Dendritic cell treated with granulocyte-macrophage colony-stimulating factor and Interleukin-4, amounts not matched to agents 40 ng/mL and 50 ng/mL, for 4 days (primary cell): ENCODE measurements at regions of chr11 and their contacts with region 1.

Region 1: DNA sequence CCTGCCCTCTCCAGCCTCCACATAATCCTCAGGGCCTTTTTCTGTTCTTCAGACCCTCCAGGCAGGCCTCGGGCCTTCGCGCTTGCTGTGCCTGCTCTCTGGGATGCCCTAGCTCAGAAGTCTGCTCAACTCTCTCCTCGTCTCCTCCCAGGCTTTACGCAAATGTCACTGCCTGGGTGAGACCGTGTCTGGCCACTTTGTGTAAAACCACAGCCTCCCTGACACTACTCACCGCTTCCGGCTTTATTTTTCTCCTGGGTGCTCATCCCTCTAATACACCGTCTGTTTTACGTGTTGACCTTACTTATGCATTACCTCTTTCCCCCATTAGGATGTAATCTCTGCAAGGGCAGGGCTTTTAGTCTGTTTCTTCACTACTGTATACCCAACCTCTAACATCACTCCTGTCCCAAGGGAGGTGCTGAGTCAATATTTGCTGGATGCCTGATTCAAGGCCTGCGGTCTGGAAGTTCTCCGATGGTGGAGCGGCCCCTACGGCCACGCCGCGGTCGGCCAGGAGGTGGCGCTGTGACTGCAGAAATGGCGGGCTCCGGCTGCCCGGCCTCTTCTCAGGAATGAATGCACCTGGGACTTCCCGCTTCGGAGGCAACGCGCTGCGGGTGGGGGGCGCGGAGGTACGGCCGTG is 58.2 kb upstream of the THY1 start:
- H3K4me3 Mint-ChIP-seq: no peak overlapping the region
- H3K27ac Mint-ChIP-seq: no peak overlapping the region
- H3K4me1 Mint-ChIP-seq: peaks cover 11% of the 10 kb centered on the region
- H3K27me3 Mint-ChIP-seq: peaks cover 27% of the 10 kb centered on the region

Region 2: GRCh38 chr11:119533921-119534736 is 53.0 kb after region 1 on chr11:
- intact Hi-C with region 1: loop called (anchors 1 kb)
- H3K4me3 Mint-ChIP-seq: no peak overlapping the region
- H3K27ac Mint-ChIP-seq: peak overlapping the region; percentile 48
- H3K4me1 Mint-ChIP-seq: peaks cover 77% of the 10 kb centered on the region
- H3K27me3 Mint-ChIP-seq: peaks cover 7% of the 10 kb centered on the region

Region 3: DNA sequence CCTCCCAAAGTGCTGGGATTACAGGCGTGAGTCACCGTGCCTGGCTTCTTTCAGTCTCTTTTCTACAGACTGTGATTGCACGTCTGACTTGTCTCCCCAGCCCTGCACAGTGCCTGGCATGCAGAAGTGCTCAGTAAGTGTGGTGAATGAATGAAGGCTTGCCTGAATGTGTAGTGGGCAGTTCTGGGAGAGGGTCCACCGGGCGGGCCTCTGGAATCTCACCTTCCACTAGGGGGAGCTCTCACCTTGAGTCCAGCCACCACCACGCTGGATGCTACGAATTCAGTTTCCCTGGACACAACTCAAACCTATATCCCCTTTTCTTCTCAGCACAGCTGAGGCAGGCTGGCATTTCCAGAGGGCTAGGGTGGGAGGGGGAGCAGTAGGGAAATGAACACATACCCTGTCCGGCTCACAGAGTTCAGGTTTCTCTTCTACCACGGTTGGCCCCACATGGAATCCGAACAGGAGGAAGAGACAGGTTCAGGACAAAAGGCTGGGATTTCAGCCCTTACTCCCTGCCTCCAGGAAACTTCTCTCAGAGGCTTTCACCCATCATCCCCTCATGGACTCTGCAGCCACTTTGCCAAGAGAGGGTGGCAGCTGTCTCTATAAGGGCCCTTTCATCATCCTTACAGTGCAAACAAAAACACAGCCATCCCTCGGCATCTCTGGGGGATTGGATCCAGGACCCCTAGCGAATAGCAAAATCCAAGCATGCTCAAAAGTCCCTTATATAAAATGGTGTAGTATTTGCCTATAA is 161.0 kb after region 1 on chr11:
- intact Hi-C with region 1: loop called (anchors 10 kb)
- H3K4me3 Mint-ChIP-seq: no peak overlapping the region
- H3K27ac Mint-ChIP-seq: no peak overlapping the region
- H3K4me1 Mint-ChIP-seq: peaks cover 26% of the 10 kb centered on the region
- H3K27me3 Mint-ChIP-seq: peaks cover 14% of the 10 kb centered on the region

Region 4: DNA sequence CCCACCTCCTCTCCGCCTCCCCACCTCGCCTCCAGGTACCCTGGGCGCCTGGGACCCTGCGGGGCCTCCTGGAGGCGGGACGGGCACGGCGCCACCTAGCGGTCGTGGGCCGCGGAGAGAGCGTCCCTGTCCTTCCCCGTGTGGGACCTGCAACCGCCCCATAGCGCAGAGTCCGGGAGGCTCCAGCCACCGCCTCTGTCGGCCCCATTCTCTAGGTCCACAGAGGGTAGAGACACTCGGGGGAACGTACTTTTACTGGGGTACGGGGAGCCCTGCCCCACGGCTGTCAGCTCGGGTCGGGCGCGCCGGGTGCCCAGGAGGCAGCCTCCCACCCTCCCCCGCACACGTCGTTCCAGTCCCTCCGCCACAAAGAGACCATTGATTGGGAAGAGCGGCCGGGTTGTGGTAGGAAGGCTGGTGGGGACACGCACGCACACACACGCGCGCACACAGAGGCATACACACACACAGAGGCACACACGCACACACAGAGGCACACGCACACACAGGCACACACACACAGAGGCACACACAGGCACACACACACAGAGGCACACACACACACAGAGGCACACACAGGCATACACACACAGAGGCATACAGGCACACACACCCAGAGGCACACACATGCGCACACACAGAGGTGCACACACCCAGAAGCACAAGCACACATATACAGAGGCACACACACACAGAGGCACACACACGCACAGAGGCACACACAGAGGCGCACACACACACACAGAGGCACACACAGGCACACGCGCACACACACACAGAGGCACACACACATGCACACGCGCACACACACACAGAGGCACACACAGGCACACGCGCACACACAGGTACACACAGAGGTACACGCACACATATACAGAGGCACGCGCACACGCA is 260.5 kb after region 1 on chr11:
- intact Hi-C with region 1: loop called (anchors 1 kb)
- H3K4me3 Mint-ChIP-seq: no peak overlapping the region
- H3K27ac Mint-ChIP-seq: no peak overlapping the region
- H3K4me1 Mint-ChIP-seq: peaks cover 5% of the 10 kb centered on the region
- H3K27me3 Mint-ChIP-seq: peaks cover 60% of the 10 kb centered on the region